ENCODE measurements at regions of chr2 and their contacts with region 1.

Region 1: GRCh38 chr2:223093436-223094241 is 41.6 kb downstream of the KCNE4 start:
- DNase-seq: peak; percentile 57 to 65
- ATAC-seq: peak; percentile 47 to 86 (median 80)
- H3K4me3 ChIP-seq: no peak overlapping the region
- H3K27ac ChIP-seq: peak overlapping the region in 8 of 10 donors; percentile 5 to 70 (median 54)
- H3K4me1 ChIP-seq: peaks cover 0 to 22% (median 14%) of the 10 kb centered on the region in 9 donors
- H3K27me3 ChIP-seq: no peaks in the 10 kb centered on the region
- CTCF ChIP-seq: no peak

Region 2: DNA sequence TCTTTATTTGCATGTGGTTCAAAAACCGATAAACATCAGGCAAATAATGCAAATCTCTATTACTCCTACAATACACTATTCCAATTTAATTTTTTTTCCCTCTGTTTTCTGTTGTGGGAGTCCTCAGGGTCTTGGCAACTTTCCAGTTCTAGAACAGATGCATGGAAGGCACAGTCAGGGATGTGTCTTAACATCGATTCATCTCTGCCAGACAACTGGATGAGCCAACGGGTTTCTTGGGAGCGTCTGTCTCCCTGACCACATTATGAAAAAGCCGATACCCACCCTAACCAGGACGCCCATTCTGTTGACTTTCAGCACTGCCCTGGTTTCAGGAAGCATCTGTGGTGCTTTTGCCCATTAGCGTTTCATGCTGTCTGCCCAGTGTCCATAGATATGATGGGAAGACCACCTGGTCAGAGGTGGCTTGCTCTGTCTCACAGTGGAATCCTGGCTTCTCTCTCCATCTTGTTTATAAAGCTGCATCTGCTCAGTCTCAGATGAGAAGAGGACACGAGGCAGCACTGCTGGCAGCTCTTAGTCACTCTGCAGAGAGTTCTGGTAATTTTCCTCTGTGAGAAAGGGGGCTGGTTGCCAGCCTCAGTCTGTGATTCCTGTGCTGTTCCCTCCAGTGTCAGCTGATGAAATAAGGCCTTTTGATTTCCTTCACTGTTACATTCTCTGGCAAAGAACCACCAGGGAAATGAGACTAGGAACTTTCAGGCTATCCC is 99.6 kb before region 1 on chr2:
- intact Hi-C with region 1: loop called in 1 of 10 experiments (anchors 10 kb)
- DNase-seq: peak; percentile 68 to 85
- ATAC-seq: peak; percentile 97 to 100 (median 99)
- H3K4me3 ChIP-seq: no peak overlapping the region
- H3K27ac ChIP-seq: peak overlapping the region; percentile 17 to 84 (median 62)
- H3K4me1 ChIP-seq: peaks cover 0 to 30% (median 17%) of the 10 kb centered on the region in 9 donors
- H3K27me3 ChIP-seq: no peaks in the 10 kb centered on the region
- CTCF ChIP-seq: no peak

Region 3: GRCh38 chr2:223051693-223052289 is 41.8 kb before region 1 on chr2 and contains the start of gene KCNE4:
- intact Hi-C with region 1: loop called in 2 of 10 experiments (anchors 2 to 5 kb)
- DNase-seq: peak; percentile 36 to 40
- ATAC-seq: peak in 6 of 8 donors; percentile 17 to 49 (median 26)
- H3K4me3 ChIP-seq: peak within 1 kb of the TSS; percentile 16 to 61 (median 54)
- H3K27ac ChIP-seq: peak within 1 kb of the TSS; percentile 64 to 88 (median 81)
- H3K4me1 ChIP-seq: peaks cover 4 to 50% (median 14%) of the 10 kb centered on the region in 9 donors
- H3K27me3 ChIP-seq: no peaks in the 10 kb centered on the region
- CTCF ChIP-seq: no peak
- total RNA-seq, gene KCNE4: 0.28 to 5.2 (median 1.2) TPM

Region 4: GRCh38 chr2:223203971-223204929 is 110.6 kb after region 1 on chr2:
- intact Hi-C with region 1: no loop called
- DNase-seq: no peak
- ATAC-seq: no peak
- H3K4me3 ChIP-seq: no peak overlapping the region
- H3K27ac ChIP-seq: peak overlapping the region in 1 of 10 donors; percentile 3
- H3K4me1 ChIP-seq: no peaks in the 10 kb centered on the region
- H3K27me3 ChIP-seq: no peaks in the 10 kb centered on the region
- CTCF ChIP-seq: no peak

Region 5: DNA sequence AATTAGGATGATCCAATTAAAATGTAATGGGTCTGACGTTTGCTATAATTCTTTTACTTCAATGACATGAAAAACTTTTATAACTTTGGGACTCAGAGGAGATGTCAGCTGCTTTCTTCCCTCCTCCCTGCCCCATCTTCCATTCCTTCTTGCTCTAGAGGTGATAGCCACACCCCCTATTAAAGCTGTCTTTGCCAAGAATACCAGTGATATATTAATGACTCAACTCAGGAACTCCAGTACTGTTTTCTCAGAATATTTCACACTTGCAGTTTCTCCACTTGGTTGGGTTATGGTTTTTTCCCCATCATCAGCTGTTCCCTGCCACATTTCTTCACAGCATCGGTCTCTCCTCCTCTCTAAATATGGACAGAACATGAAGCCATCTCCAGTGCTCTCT is 142.3 kb after region 1 on chr2:
- intact Hi-C with region 1: no loop called
- DNase-seq: no peak
- ATAC-seq: no peak
- H3K4me3 ChIP-seq: no peak overlapping the region
- H3K27ac ChIP-seq: no peak overlapping the region
- H3K4me1 ChIP-seq: no peaks in the 10 kb centered on the region
- H3K27me3 ChIP-seq: no peaks in the 10 kb centered on the region
- CTCF ChIP-seq: no peak